Activated CD4-positive, alpha-beta memory T cell treated with anti-CD3 and anti-CD28 coated beads for 36 hours (primary cell): ENCODE measurements at regions of chr7 and their contacts with region 1.

Region 1: GRCh38 chr7:132580717-132581285 is 4.5 kb upstream of the PLXNA4 start:
- DNase-seq: peak; percentile 76
- H3K4me3 Mint-ChIP-seq: no peak overlapping the region
- H3K27ac Mint-ChIP-seq: no peak overlapping the region
- H3K4me1 Mint-ChIP-seq: peaks cover 2% of the 10 kb centered on the region
- H3K27me3 Mint-ChIP-seq: peaks cover 31% of the 10 kb centered on the region

Region 2: GRCh38 chr7:132318352-132319318 is 262.2 kb before region 1 on chr7:
- CTCF ChIA-PET with region 1: interaction called, 76 read pairs
- POLR2A ChIA-PET with region 1: no interaction called
- intact Hi-C with region 1: loop called (anchors 1 kb)
- DNase-seq: peak; percentile 84
- H3K4me3 Mint-ChIP-seq: no peak overlapping the region
- H3K27ac Mint-ChIP-seq: no peak overlapping the region
- H3K4me1 Mint-ChIP-seq: peaks cover 10% of the 10 kb centered on the region
- H3K27me3 Mint-ChIP-seq: peaks cover 16% of the 10 kb centered on the region

Region 3: DNA sequence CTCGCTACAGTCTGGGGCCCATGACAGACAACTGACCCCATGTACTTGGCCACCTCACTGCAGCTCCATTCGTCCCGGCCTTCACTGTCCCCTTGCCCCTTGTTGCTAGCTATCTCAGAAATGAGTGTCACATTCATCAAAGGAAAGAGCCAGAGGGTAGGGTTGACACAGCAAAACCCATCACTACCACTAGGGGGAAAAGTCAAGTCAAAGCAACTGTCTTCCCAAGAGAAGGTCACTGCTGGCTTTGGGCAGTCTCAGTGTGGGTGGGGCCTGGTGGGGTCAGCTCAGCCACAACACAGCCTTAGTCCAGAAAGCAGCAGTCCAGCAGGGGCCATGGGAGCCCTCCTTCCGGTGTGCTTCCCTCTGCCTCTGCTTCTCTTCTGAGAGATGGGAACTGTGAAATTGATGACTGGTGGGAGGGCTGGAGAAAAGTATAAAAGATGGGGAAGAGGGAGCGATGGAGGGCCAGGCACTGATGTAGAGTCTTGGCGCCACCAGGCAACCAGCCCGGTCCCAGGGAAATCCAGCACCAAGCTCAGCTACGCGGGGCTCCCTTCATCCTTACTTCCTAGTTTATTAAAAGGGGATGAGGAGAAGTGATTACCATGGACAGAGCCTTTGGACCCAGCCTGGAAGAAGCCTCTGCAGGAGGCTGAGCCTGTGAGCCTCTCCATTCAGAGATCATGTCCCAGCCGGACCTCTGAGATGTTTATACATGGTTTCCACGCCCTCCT is 62.5 kb before region 1 on chr7:
- CTCF ChIA-PET with region 1: interaction called, 11 read pairs
- POLR2A ChIA-PET with region 1: no interaction called
- intact Hi-C with region 1: no loop called
- DNase-seq: no peak
- H3K4me3 Mint-ChIP-seq: no peak overlapping the region
- H3K27ac Mint-ChIP-seq: no peak overlapping the region
- H3K4me1 Mint-ChIP-seq: no peaks in the 10 kb centered on the region
- H3K27me3 Mint-ChIP-seq: no peaks in the 10 kb centered on the region

Region 4: DNA sequence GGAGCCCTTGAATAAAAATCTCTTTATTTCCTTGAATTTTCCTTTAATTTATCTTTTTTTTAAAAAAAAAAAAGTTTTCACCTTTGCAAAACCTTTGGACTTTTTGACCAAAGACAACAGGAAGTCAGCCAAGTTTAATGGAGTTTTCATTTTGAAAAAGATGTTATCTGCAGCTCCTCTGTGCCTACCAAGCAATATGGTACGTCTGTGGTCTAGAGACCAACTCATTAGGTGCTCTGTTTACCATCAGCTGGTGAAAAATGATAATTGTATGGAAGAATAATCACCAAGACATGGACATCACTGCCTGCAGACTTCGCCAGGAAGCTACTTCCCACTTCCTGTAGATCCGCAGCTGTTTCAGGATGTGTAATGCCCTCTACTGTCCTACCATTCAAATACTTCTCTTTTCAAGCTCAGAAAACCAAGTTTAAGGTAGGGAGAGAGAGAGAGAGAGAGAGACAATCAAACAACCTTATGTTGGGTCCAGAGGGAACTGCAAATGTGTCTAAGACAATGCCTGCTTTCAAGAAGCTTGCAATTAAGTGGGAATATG is 23.2 kb before region 1 on chr7:
- CTCF ChIA-PET with region 1: interaction called, 19 read pairs
- POLR2A ChIA-PET with region 1: no interaction called
- intact Hi-C with region 1: no loop called
- DNase-seq: no peak
- H3K4me3 Mint-ChIP-seq: no peak overlapping the region
- H3K27ac Mint-ChIP-seq: no peak overlapping the region
- H3K4me1 Mint-ChIP-seq: peaks cover 4% of the 10 kb centered on the region
- H3K27me3 Mint-ChIP-seq: no peaks in the 10 kb centered on the region

Region 5: DNA sequence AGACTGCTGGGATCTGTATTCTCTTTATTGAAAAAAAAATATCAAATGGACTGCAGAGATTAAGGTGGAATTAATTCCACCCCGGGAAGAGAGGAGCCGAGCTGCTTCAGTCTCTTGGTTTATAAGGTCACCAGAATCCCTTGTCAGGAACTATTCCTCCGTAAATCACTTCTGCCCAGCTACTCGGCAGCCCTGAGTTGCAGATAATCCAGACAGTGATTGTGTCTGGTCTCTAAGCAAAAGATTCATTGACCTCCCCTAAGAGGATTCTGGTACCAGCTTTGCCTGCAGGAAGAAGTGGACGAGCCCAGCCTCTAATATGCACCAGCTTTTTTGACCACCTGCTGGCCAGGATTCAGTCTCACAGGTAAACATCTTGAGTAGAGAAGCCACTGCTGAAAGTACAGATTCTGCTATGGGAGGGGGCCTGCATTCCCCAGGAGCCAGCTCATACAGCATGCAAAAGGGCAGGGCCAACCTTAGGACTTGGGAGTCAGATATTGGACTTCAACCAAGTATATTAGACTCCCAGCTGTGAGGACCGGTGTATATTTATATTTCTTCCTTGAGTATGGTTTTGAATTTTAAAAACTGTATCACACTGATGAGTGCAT is 22.5 kb after region 1 on chr7:
- CTCF ChIA-PET with region 1: interaction called, 10 read pairs
- POLR2A ChIA-PET with region 1: no interaction called
- intact Hi-C with region 1: no loop called
- DNase-seq: no peak
- H3K4me3 Mint-ChIP-seq: no peak overlapping the region
- H3K27ac Mint-ChIP-seq: no peak overlapping the region
- H3K4me1 Mint-ChIP-seq: no peaks in the 10 kb centered on the region
- H3K27me3 Mint-ChIP-seq: peaks cover 2% of the 10 kb centered on the region